Activated CD4-positive, alpha-beta T cell treated with anti-CD3 and anti-CD28 coated beads for 36 hours (primary cell): ENCODE measurements at regions of chr11 and their contacts with region 1.

Region 1: DNA sequence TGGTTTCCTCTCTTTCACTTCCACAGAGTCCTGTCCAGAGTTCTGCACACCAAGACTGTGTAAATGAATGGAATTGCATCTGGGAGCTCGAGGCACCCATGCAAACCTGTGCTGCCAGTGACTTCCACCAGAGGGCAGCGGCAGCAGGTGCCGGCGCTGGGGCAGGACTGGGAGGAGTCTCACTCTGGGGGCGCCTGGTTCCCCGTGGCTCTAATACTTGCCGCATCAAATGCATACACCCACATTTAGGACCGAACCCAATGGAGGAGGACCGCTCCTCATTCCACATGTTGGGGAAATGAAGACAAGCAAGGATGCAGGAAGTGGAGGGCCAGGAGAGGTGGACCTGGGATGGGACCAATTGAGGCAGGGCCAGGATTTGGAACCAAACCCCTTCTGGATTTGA is 1.1 kb upstream of the CD6 start:
- DNase-seq: peak; percentile 91
- ATAC-seq: peak; percentile 51
- H3K4me3 Mint-ChIP-seq: peak overlapping the region; percentile 87
- H3K27ac Mint-ChIP-seq: peak overlapping the region; percentile 98
- H3K4me1 Mint-ChIP-seq: peaks cover 16% of the 10 kb centered on the region
- H3K27me3 Mint-ChIP-seq: peaks cover 2% of the 10 kb centered on the region

Region 2: DNA sequence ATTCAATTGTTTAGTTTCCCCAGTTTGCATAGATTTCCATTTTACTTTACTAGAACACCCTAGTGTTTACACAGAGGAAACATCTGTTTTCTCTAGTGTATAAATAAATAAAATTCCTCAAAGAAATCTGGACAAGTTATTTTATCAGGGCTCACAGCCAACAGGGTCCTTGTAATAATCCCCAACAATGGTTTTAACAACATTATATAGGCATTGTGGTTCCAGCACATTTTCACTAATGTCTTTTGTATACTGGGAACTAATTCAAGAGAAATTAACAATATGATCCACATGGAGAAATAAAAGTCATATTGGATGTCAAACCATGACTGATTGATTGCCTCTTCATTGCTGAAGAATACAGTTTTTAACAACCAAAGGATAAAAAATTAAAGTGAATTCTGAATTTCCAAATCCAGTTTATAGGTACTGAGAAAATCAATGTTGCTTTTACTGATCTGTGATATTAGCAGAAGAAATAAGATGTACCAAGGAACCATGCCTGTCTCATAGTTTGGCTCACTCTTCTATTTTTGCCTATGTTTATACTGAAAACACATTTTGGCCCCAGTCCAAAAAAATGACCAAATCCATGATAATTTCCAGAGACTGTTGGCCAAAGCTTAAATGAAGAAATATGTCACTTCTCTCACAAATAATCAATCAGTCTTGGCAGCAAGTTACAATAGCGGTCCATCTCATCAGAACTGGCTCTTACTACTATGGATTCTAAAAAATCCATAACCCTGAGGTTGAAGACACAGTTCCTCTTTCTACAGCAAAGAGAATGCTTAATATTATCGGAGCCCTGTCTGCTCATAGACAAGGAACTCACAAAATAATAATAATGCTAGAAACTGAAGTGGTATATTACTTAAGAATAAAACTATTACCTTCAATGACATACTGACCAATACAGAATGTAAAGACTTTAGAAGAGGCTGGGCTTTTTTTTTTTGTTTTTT is 456.6 kb before region 1 on chr11:
- CTCF ChIA-PET with region 1: no interaction called
- POLR2A ChIA-PET with region 1: no interaction called
- intact Hi-C with region 1: no loop called
- DNase-seq: no peak
- ATAC-seq: no peak
- H3K4me3 Mint-ChIP-seq: no peak overlapping the region
- H3K27ac Mint-ChIP-seq: no peak overlapping the region
- H3K4me1 Mint-ChIP-seq: no peaks in the 10 kb centered on the region
- H3K27me3 Mint-ChIP-seq: peaks cover 5% of the 10 kb centered on the region

Region 3: GRCh38 chr11:60841797-60842667 is 128.3 kb before region 1 on chr11 and contains the start of gene CCDC86:
- CTCF ChIA-PET with region 1: no interaction called
- POLR2A ChIA-PET with region 1: no interaction called
- intact Hi-C with region 1: loop called in 1 of 2 experiments (anchors 1 kb)
- DNase-seq: peak; percentile 98
- ATAC-seq: peak; percentile 95
- H3K4me3 Mint-ChIP-seq: peak within 1 kb of the TSS; percentile 83
- H3K27ac Mint-ChIP-seq: peak within 1 kb of the TSS; percentile 96
- H3K4me1 Mint-ChIP-seq: peaks cover 38% of the 10 kb centered on the region
- H3K27me3 Mint-ChIP-seq: no peaks in the 10 kb centered on the region
- total RNA-seq, gene CCDC86: 52.1 to 75.1 TPM

Region 4: GRCh38 chr11:60992842-60993409 is 22.6 kb after region 1 on chr11:
- CTCF ChIA-PET with region 1: no interaction called
- POLR2A ChIA-PET with region 1: no interaction called
- intact Hi-C with region 1: loop called in 1 of 2 experiments (anchors 1 kb)
- DNase-seq: peak; percentile 18
- ATAC-seq: no peak
- H3K4me3 Mint-ChIP-seq: peak overlapping the region; percentile 61
- H3K27ac Mint-ChIP-seq: peak overlapping the region; percentile 97
- H3K4me1 Mint-ChIP-seq: peaks cover 83% of the 10 kb centered on the region
- H3K27me3 Mint-ChIP-seq: no peaks in the 10 kb centered on the region

Region 5: GRCh38 chr11:61011950-61012736 is 41.8 kb after region 1 on chr11:
- CTCF ChIA-PET with region 1: interaction called, 14 read pairs
- POLR2A ChIA-PET with region 1: interaction called, 3 read pairs
- intact Hi-C with region 1: no loop called
- DNase-seq: no peak
- ATAC-seq: no peak
- H3K4me3 Mint-ChIP-seq: no peak overlapping the region
- H3K27ac Mint-ChIP-seq: peak overlapping the region; percentile 79
- H3K4me1 Mint-ChIP-seq: peaks cover 61% of the 10 kb centered on the region
- H3K27me3 Mint-ChIP-seq: no peaks in the 10 kb centered on the region

Region 6: DNA sequence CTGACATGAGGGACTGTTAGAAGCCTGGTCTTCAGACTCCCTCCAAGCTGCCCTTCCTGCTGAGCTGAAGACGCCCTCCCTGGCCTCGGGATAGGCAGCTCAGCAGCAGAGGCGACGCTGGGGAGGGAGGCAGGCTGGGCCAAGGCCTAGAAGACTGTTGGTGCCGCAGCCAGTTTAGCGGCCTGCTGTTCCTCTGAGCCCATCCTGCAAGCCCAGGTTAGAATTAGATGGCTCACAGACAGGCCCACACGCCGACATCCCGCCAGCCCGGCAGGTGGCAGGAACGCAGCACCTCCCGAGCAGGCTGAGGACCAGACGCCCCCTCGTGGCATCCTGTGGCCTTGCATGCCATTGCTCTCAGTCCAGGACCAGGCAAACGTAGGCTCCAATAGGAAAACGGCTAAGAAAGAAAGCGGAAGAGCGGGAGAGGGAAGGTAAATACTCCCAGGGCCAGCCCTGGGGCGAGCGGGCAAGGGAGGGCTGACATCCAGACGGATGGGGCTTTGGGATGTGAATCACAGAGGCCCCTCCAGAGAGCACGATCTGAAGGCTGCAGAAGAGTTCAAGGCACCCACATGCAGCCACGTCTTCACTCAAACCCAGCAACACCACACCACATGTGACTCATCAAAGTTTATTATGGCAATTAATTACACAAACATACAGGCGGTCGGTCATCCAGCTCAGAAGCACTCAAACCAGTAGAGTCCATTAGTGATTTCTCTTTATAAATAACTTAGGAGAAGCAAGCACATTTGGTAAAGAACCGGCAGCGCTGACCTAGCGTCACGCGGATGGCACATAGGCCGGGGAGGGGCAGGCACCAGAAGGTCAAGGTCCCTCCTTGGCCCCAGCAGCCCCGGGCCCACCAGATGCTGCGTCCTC is 159.5 kb after region 1 on chr11:
- CTCF ChIA-PET with region 1: interaction called, 16 read pairs
- POLR2A ChIA-PET with region 1: no interaction called
- intact Hi-C with region 1: loop called (anchors 1 kb)
- DNase-seq: peak; percentile 97
- ATAC-seq: peak; percentile 89
- H3K4me3 Mint-ChIP-seq: peak overlapping the region; percentile 14
- H3K27ac Mint-ChIP-seq: peak overlapping the region; percentile 64
- H3K4me1 Mint-ChIP-seq: peaks cover 27% of the 10 kb centered on the region
- H3K27me3 Mint-ChIP-seq: no peaks in the 10 kb centered on the region

Region 7: GRCh38 chr11:62103986-62104385 is 1133.6 kb after region 1 on chr11:
- CTCF ChIA-PET with region 1: no interaction called
- POLR2A ChIA-PET with region 1: no interaction called
- intact Hi-C with region 1: no loop called
- DNase-seq: no peak
- ATAC-seq: no peak
- H3K4me3 Mint-ChIP-seq: no peak overlapping the region
- H3K27ac Mint-ChIP-seq: no peak overlapping the region
- H3K4me1 Mint-ChIP-seq: peaks cover 16% of the 10 kb centered on the region
- H3K27me3 Mint-ChIP-seq: no peaks in the 10 kb centered on the region